Naive thymus-derived CD4-positive, alpha-beta T cell (primary cell): ENCODE measurements at regions of chr12 and their contacts with region 1.

Region 1: DNA sequence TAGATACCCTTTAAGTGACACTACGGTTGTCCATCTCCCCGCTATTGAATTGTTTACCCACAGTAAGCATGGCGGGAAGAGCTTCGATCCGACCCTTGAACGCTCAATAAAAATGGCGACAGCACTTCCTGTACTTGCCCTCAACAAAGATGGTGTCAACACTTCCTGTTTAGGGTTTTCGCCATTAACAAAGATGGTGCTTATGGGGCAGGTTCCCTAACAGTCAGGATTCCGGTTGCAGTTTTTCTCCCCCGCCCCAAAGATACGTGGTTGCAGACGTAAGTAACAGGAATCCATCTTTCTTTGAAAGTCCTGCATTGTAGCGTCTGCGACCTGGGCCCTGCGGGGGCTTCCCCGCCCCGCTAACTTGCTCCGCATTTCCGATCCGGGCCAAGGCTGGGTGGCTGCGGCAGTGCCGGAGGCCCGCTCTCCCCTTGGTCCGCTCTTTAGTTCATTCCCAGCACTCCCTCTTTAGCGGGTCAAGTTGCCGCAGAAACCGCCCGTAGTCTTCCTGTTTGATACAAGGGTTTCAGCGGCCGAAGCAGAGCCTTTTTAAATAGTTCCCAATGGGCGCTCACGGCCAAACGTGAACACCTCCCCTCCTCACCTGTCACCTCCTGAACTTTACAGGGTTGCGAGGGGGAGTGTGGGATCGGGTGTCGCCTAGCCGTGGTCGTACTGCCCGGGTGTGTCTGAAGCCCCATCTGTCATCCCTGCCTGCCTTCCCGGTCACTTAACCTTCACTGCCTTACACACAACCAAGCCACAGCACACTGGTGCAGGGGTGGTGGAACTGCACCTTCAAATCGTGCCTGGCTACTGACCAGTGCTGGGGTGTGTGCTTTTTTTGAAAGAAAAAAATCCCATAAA is at the start of gene CRADD:
- DNase-seq: peak; percentile 75 to 97 (median 95)
- ATAC-seq: peak; percentile 95
- H3K4me3 ChIP-seq: peak within 1 kb of the TSS; percentile 93
- H3K4me3 Mint-ChIP-seq: peak within 1 kb of the TSS; percentile 82 to 100 (median 98)
- H3K27ac ChIP-seq: peak within 1 kb of the TSS; percentile 99
- H3K27ac Mint-ChIP-seq: peak within 1 kb of the TSS; percentile 97 to 100 (median 100)
- H3K4me1 ChIP-seq: peaks cover 5 to 9% of the 10 kb centered on the region in 2 donors
- H3K4me1 Mint-ChIP-seq: peaks cover 19 to 56% (median 41%) of the 10 kb centered on the region in 7 donors
- H3K27me3 ChIP-seq: no peaks in the 10 kb centered on the region
- H3K27me3 Mint-ChIP-seq: peaks cover 2 to 13% (median 9%) of the 10 kb centered on the region in 5 donors
- total RNA-seq, gene CRADD: 11.4 to 17.1 (median 13.8) TPM

Region 2: DNA sequence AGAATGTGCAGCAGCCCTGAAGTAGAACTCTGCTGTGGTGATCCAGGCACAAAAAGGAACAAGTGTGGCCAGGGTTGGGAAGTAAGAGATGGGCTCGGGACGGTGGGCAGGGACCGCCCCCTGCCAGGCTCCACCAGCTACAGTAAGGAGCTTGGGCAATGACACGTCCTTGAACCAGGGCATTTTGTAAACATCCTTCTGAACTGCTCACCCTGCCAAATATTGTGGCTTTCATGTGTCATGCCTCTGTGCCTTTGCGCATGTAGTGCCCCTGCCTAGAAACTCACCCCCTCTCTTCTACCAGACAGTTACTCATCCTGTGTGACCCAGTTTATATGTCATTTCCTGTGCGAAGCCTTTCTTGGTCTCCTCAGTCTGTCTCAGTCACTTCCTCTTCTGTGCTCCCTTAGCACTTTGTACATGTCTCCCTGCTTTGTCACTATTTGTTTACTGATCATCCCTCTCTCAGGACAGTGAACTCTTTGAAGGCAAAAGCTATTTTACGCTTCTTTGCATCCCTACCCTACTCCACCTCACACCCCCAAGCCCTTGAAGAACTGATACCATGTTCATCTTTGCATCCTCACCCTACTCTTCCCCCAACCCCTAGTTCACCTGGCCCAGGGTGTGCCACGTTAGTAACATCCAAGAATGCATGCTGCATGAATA is 1083.6 kb before region 1 on chr12:
- CTCF ChIA-PET with region 1: no interaction called
- POLR2A ChIA-PET with region 1: no interaction called
- intact Hi-C with region 1: loop called in 1 of 2 experiments (anchors 5 kb)
- DNase-seq: peak; percentile 51 to 97 (median 92)
- ATAC-seq: peak; percentile 95
- H3K4me3 ChIP-seq: peak overlapping the region; percentile 16
- H3K4me3 Mint-ChIP-seq: peak overlapping the region; percentile 22 to 83 (median 72)
- H3K27ac ChIP-seq: peak overlapping the region; percentile 86
- H3K27ac Mint-ChIP-seq: peak overlapping the region; percentile 90 to 100 (median 98)
- H3K4me1 ChIP-seq: peaks cover 27 to 30% of the 10 kb centered on the region in 2 donors
- H3K4me1 Mint-ChIP-seq: peaks cover 23 to 74% (median 44%) of the 10 kb centered on the region in 7 donors
- H3K27me3 ChIP-seq: no peaks in the 10 kb centered on the region
- H3K27me3 Mint-ChIP-seq: no peaks in the 10 kb centered on the region

Region 3: GRCh38 chr12:92796650-92797049 is 880.8 kb before region 1 on chr12:
- CTCF ChIA-PET with region 1: no interaction called
- POLR2A ChIA-PET with region 1: no interaction called
- intact Hi-C with region 1: no loop called
- DNase-seq: no peak
- ATAC-seq: no peak
- H3K4me3 ChIP-seq: no peak overlapping the region
- H3K4me3 Mint-ChIP-seq: no peak overlapping the region
- H3K27ac ChIP-seq: no peak overlapping the region
- H3K27ac Mint-ChIP-seq: no peak overlapping the region
- H3K4me1 ChIP-seq: no peaks in the 10 kb centered on the region
- H3K4me1 Mint-ChIP-seq: peaks cover 0 to 18% (median 12%) of the 10 kb centered on the region in 7 donors
- H3K27me3 ChIP-seq: no peaks in the 10 kb centered on the region
- H3K27me3 Mint-ChIP-seq: no peaks in the 10 kb centered on the region

Region 4: GRCh38 chr12:93448796-93449195 is 228.6 kb before region 1 on chr12:
- CTCF ChIA-PET with region 1: no interaction called
- POLR2A ChIA-PET with region 1: no interaction called
- intact Hi-C with region 1: loop called in 1 of 2 experiments (anchors 1 kb)
- DNase-seq: no peak
- ATAC-seq: no peak
- H3K4me3 ChIP-seq: no peak overlapping the region
- H3K4me3 Mint-ChIP-seq: peak overlapping the region in 9 of 10 donors; percentile 3 to 82 (median 52)
- H3K27ac ChIP-seq: peak overlapping the region; percentile 65
- H3K27ac Mint-ChIP-seq: peak overlapping the region in 8 of 9 donors; percentile 92 to 100 (median 97)
- H3K4me1 ChIP-seq: peaks cover 0 to 29% of the 10 kb centered on the region in 2 donors
- H3K4me1 Mint-ChIP-seq: peaks cover 14 to 32% (median 28%) of the 10 kb centered on the region in 7 donors
- H3K27me3 ChIP-seq: no peaks in the 10 kb centered on the region
- H3K27me3 Mint-ChIP-seq: no peaks in the 10 kb centered on the region

Region 5: GRCh38 chr12:93536766-93537488 is 140.5 kb before region 1 on chr12:
- CTCF ChIA-PET with region 1: no interaction called
- POLR2A ChIA-PET with region 1: no interaction called
- intact Hi-C with region 1: no loop called
- DNase-seq: no peak
- ATAC-seq: peak; percentile 46
- H3K4me3 ChIP-seq: no peak overlapping the region
- H3K4me3 Mint-ChIP-seq: peak overlapping the region in 4 of 10 donors; percentile 11 to 40 (median 28)
- H3K27ac ChIP-seq: peak overlapping the region; percentile 40
- H3K27ac Mint-ChIP-seq: peak overlapping the region in 5 of 9 donors; percentile 4 to 72 (median 50)
- H3K4me1 ChIP-seq: no peaks in the 10 kb centered on the region
- H3K4me1 Mint-ChIP-seq: peaks cover 15 to 63% (median 41%) of the 10 kb centered on the region in 7 donors
- H3K27me3 ChIP-seq: no peaks in the 10 kb centered on the region
- H3K27me3 Mint-ChIP-seq: no peaks in the 10 kb centered on the region

Region 6: GRCh38 chr12:93699271-93700145 is 22.1 kb after region 1 on chr12:
- CTCF ChIA-PET with region 1: no interaction called
- POLR2A ChIA-PET with region 1: no interaction called
- intact Hi-C with region 1: no loop called
- DNase-seq: no peak
- ATAC-seq: no peak
- H3K4me3 ChIP-seq: no peak overlapping the region
- H3K4me3 Mint-ChIP-seq: no peak overlapping the region
- H3K27ac ChIP-seq: no peak overlapping the region
- H3K27ac Mint-ChIP-seq: peak overlapping the region in 1 of 9 donors; percentile 1
- H3K4me1 ChIP-seq: no peaks in the 10 kb centered on the region
- H3K4me1 Mint-ChIP-seq: peaks cover 9 to 45% (median 30%) of the 10 kb centered on the region in 7 donors
- H3K27me3 ChIP-seq: no peaks in the 10 kb centered on the region
- H3K27me3 Mint-ChIP-seq: no peaks in the 10 kb centered on the region

Region 7: GRCh38 chr12:93742110-93742934 is 64.9 kb after region 1 on chr12:
- CTCF ChIA-PET with region 1: no interaction called
- POLR2A ChIA-PET with region 1: interaction called, 3 read pairs
- intact Hi-C with region 1: loop called (anchors 1 kb)
- DNase-seq: peak; percentile 25 to 63 (median 40)
- ATAC-seq: peak; percentile 96
- H3K4me3 ChIP-seq: peak overlapping the region; percentile 83
- H3K4me3 Mint-ChIP-seq: peak overlapping the region; percentile 83 to 97 (median 93)
- H3K27ac ChIP-seq: peak overlapping the region; percentile 74
- H3K27ac Mint-ChIP-seq: peak overlapping the region; percentile 29 to 98 (median 92)
- H3K4me1 ChIP-seq: peaks cover 0 to 13% of the 10 kb centered on the region in 2 donors
- H3K4me1 Mint-ChIP-seq: peaks cover 27 to 55% (median 41%) of the 10 kb centered on the region in 7 donors
- H3K27me3 ChIP-seq: no peaks in the 10 kb centered on the region
- H3K27me3 Mint-ChIP-seq: peaks cover 0 to 2% (median 0%) of the 10 kb centered on the region in 5 donors

Region 8: DNA sequence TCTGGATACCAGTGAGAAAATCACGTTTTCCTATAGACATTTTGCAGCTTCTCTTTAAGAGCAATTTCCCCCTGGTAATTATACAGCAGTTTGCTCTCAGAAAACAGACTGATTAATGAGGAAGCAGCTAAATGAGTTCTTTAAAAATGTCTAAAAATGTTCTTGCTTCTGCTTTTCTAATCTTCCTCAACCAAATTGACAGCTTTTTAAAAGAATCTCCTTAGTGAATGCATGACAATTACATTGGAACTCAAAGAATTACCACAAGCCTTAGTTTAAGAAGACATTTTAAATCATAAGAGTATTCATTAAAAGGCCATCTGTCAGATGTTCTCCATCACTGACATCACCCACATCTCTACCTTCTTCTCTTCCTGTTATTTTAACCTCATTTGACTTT is 335.2 kb after region 1 on chr12:
- CTCF ChIA-PET with region 1: no interaction called
- POLR2A ChIA-PET with region 1: no interaction called
- intact Hi-C with region 1: loop called in 1 of 2 experiments (anchors 1 kb)
- DNase-seq: no peak
- ATAC-seq: no peak
- H3K4me3 ChIP-seq: no peak overlapping the region
- H3K4me3 Mint-ChIP-seq: peak overlapping the region in 2 of 10 donors; percentile 2 to 5
- H3K27ac ChIP-seq: no peak overlapping the region
- H3K27ac Mint-ChIP-seq: peak overlapping the region in 6 of 9 donors; percentile 4 to 89 (median 40)
- H3K4me1 ChIP-seq: peaks cover 0 to 18% of the 10 kb centered on the region in 2 donors
- H3K4me1 Mint-ChIP-seq: peaks cover 12 to 64% (median 40%) of the 10 kb centered on the region in 7 donors
- H3K27me3 ChIP-seq: no peaks in the 10 kb centered on the region
- H3K27me3 Mint-ChIP-seq: no peaks in the 10 kb centered on the region

Region 9: DNA sequence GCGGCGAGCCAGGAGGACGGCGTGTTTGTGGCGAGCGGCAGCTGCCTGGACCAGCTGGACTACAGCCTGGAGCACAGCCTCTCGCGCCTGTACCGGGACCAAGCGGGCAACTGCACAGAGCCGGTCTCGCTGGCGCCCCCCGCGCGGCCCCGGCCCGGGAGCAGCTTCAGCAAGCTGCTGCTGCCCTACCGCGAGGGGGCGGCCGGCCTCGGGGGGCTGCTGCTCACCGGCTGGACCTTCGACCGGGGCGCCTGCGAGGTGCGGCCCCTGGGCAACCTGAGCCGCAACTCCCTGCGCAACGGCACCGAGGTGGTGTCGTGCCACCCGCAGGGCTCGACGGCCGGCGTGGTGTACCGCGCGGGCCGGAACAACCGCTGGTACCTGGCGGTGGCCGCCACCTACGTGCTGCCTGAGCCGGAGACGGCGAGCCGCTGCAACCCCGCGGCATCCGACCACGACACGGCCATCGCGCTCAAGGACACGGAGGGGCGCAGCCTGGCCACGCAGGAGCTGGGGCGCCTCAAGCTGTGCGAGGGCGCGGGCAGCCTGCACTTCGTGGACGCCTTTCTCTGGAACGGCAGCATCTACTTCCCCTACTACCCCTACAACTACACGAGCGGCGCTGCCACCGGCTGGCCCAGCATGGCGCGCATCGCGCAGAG is 471.8 kb after region 1 on chr12:
- CTCF ChIA-PET with region 1: no interaction called
- POLR2A ChIA-PET with region 1: no interaction called
- intact Hi-C with region 1: loop called in 1 of 2 experiments (anchors 1 kb)
- DNase-seq: peak; percentile 23 to 70 (median 45)
- ATAC-seq: peak; percentile 51
- H3K4me3 ChIP-seq: peak overlapping the region; percentile 75
- H3K4me3 Mint-ChIP-seq: peak overlapping the region; percentile 76 to 97 (median 93)
- H3K27ac ChIP-seq: peak overlapping the region; percentile 17
- H3K27ac Mint-ChIP-seq: peak overlapping the region in 3 of 9 donors; percentile 51 to 67 (median 63)
- H3K4me1 ChIP-seq: peaks cover 0 to 17% of the 10 kb centered on the region in 2 donors
- H3K4me1 Mint-ChIP-seq: peaks cover 18 to 53% (median 39%) of the 10 kb centered on the region in 7 donors
- H3K27me3 ChIP-seq: no peaks in the 10 kb centered on the region
- H3K27me3 Mint-ChIP-seq: peaks cover 0 to 31% (median 0%) of the 10 kb centered on the region in 5 donors

Region 10: DNA sequence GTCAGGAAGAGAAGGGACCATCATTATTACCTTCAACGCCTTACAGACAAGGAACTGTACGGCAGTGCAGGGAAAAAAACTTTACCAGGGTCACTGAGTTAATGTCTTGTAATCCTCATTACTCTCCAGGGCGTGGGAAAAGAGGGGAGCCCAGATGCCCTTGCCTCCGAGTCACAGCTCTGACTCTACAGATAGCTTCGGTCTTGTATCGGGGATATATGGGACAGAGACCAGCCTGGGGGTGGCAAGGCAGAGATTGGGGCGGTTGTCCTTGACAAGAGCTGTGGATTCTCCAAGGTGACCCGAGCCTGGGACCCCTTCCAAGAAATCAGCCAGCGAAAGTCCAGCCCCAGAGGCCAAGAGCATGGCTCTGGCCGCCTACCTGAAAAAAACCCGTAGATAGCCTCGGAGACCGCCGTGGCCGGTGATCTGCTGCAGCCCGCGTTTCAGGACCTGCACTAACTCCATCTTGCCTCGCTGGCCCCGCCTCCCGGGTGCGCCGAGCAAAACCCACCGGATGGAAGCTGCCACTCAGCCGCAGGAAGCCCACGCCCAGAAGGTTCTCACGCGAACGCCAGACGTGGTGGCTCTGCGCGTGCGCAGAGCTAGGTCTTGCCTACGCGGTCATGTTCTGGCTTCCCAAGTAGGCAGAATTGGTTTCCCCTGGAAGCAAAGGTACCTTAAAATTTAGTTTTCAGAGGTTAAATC is 1325.9 kb after region 1 on chr12 and contains the start of gene NDUFA12:
- CTCF ChIA-PET with region 1: no interaction called
- POLR2A ChIA-PET with region 1: no interaction called
- intact Hi-C with region 1: loop called (anchors 1 to 5 kb)
- DNase-seq: peak; percentile 89 to 95 (median 92)
- ATAC-seq: peak; percentile 100
- H3K4me3 ChIP-seq: peak within 1 kb of the TSS; percentile 72
- H3K4me3 Mint-ChIP-seq: peak within 1 kb of the TSS; percentile 87 to 97 (median 96)
- H3K27ac ChIP-seq: peak within 1 kb of the TSS; percentile 84
- H3K27ac Mint-ChIP-seq: peak within 1 kb of the TSS; percentile 86 to 97 (median 95)
- H3K4me1 ChIP-seq: peaks cover 27 to 56% of the 10 kb centered on the region in 2 donors
- H3K4me1 Mint-ChIP-seq: peaks cover 39 to 79% (median 64%) of the 10 kb centered on the region in 7 donors
- H3K27me3 ChIP-seq: no peaks in the 10 kb centered on the region
- H3K27me3 Mint-ChIP-seq: no peaks in the 10 kb centered on the region
- total RNA-seq, gene NDUFA12: 57.8 to 123 (median 68.5) TPM